Activated CD4-positive, alpha-beta memory T cell treated with anti-CD3 and anti-CD28 coated beads, Interleukin-2, amount 10 ng/mL, durations not matched to agents 7 days and 5 days (primary cell): ENCODE measurements at regions of chr2 and their contacts with region 1.

Region 1: GRCh38 chr2:230225486-230225885 is at the start of gene SP140:
- DNase-seq: peak; percentile 88
- H3K4me3 Mint-ChIP-seq: peak within 1 kb of the TSS; percentile 77
- H3K27ac Mint-ChIP-seq: peak within 1 kb of the TSS; percentile 94
- H3K4me1 Mint-ChIP-seq: peaks cover 64% of the 10 kb centered on the region
- H3K27me3 Mint-ChIP-seq: no peaks in the 10 kb centered on the region
- total RNA-seq, gene SP140: 132 to 137 TPM

Region 2: GRCh38 chr2:230347659-230348305 is 122.3 kb after region 1 on chr2:
- CTCF ChIA-PET with region 1: no interaction called
- POLR2A ChIA-PET with region 1: interaction called, 12 read pairs
- DNase-seq: peak; percentile 63
- H3K4me3 Mint-ChIP-seq: peak overlapping the region; percentile 63
- H3K27ac Mint-ChIP-seq: peak overlapping the region; percentile 92
- H3K4me1 Mint-ChIP-seq: peaks cover 72% of the 10 kb centered on the region
- H3K27me3 Mint-ChIP-seq: no peaks in the 10 kb centered on the region